ENCODE measurements at regions of chr4 and their contacts with region 1.

Region 1: GRCh38 chr4:118888666-118889311 is at the start of gene SYNPO2:
- DNase-seq: no peak
- H3K4me3 ChIP-seq: peak within 1 kb of the TSS; percentile 74
- CTCF ChIP-seq: no peak

Region 2: GRCh38 chr4:118740869-118741268 is 147.9 kb before region 1 on chr4:
- CTCF ChIA-PET with region 1: interaction called, 12 read pairs
- POLR2A ChIA-PET with region 1: no interaction called
- DNase-seq: no peak
- H3K4me3 ChIP-seq: no peak overlapping the region
- CTCF ChIP-seq: no peak

Region 3: DNA sequence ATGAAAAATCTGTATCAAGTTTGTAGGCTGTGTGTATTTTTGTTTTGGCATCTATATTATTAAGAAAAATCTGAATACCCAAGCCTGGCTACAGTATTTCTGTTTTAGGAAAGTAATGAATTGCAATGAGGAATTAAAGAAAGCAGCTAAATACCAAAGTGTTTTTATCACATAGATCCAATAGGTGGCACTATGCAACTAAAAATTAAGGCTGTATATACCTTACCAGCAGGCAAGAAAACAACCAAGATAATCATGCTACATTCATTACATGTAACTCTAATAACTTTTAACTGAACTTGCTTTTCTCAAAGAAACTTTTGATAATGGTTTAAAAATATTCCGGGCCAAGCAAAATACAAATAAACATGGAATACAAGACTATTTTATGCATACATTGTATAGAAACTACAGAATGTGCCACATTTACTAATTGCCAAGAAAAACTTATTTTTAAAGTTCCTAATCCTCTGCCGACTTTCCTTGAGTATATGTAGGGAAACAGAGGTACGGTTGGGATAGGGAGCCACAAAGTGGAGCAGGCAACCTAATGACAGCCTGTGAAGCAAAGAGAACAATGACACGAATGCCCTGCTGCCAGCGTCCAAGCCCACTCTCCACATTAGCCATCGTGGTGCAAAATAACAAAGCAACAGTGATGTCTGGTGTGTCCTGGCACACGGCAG is 116.6 kb before region 1 on chr4:
- CTCF ChIA-PET with region 1: interaction called, 49 read pairs
- POLR2A ChIA-PET with region 1: interaction called, 3 read pairs
- DNase-seq: no peak
- H3K4me3 ChIP-seq: no peak overlapping the region
- CTCF ChIP-seq: peak; percentile 22

Region 4: GRCh38 chr4:118865091-118865708 is 23.6 kb before region 1 on chr4:
- CTCF ChIA-PET with region 1: interaction called, 19 read pairs
- POLR2A ChIA-PET with region 1: interaction called, 3 read pairs
- DNase-seq: no peak
- H3K4me3 ChIP-seq: no peak overlapping the region
- CTCF ChIP-seq: peak; percentile 70

Region 5: GRCh38 chr4:118911238-118911703 is 22.5 kb after region 1 on chr4:
- CTCF ChIA-PET with region 1: interaction called, 40 read pairs
- POLR2A ChIA-PET with region 1: no interaction called
- DNase-seq: peak; percentile 51
- H3K4me3 ChIP-seq: 0 out of 2 replicates have a peak overlapping the region, but pooled peaks have one; percentile 2
- CTCF ChIP-seq: no peak

Region 6: GRCh38 chr4:119053997-119054396 is 165.2 kb after region 1 on chr4:
- CTCF ChIA-PET with region 1: no interaction called
- POLR2A ChIA-PET with region 1: no interaction called
- DNase-seq: no peak
- H3K4me3 ChIP-seq: no peak overlapping the region
- CTCF ChIP-seq: no peak